Activated CD4-positive, alpha-beta T cell treated with anti-CD3 and anti-CD28 coated beads, Interleukin-2, amount 10 ng/mL, durations not matched to agents 24 days and 14 days (primary cell): ENCODE measurements at regions of chr6 and their contacts with region 1.

Region 1: GRCh38 chr6:114096561-114097172 is 125.7 kb upstream of the HDAC2 start:
- DNase-seq: peak; percentile 62
- H3K4me3 Mint-ChIP-seq: no peak overlapping the region
- H3K27ac Mint-ChIP-seq: no peak overlapping the region
- H3K4me1 Mint-ChIP-seq: no peaks in the 10 kb centered on the region
- H3K27me3 Mint-ChIP-seq: peaks cover 4% of the 10 kb centered on the region

Region 2: DNA sequence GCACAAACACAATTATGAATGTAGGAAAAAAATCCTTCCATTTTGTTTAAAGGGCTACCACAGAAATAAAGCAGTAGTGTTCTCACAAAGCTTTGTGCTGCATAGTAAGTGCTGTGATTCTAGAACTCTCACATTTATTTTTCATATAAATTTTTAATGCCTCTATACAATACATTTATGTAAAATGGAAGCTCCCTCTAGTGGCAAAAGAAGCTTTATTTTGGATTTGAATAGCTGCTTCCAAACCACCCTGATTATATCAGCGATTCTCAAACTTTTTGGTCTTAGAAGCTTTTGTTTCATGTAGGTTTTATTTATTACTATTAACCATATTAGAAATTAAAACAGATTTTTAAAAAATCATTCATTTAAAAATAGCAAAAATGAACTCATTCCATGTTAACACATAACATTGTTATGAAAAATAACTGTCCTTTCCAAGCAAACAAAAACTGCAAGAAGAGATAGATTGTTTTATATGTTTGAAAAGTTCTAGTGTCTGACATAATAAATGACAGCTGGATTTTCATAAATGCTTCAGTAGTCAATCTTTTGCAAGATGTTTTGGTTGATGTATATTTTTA is 207.7 kb after region 1 on chr6:
- intact Hi-C with region 1: loop called (anchors 10 kb)
- DNase-seq: no peak
- H3K4me3 Mint-ChIP-seq: no peak overlapping the region
- H3K27ac Mint-ChIP-seq: no peak overlapping the region
- H3K4me1 Mint-ChIP-seq: no peaks in the 10 kb centered on the region
- H3K27me3 Mint-ChIP-seq: no peaks in the 10 kb centered on the region